ENCODE measurements at regions of chr4 and their contacts with region 1.

Region 1: DNA sequence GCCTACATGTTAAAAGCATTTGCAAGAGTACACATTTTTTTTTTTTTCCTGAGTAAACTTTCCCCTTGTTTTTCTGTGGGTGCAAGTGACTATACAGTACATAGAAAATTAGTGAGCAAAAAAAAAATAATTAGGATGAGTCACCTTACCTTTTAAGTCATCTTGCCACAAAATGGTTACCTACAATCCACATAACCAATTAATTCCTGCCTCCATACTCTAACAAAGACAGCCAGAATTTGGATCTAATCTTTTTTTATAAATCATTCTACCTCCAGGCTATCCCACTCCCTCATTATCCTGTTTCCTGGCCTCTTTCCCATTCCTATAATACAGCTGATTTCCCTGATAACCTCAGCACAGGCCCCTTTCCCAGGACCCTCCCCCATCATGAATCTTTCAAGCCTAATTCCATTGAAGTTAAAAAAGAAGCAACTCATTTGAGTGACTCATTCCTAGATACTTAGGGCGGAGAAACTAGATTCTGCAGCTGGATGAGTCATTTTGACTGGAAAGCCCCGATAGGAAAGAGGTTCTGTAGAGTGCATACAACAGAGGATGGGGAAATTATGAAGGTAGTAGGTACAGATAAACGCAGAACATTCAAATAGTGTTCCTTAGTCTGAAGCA is 128.2 kb downstream of the C4orf51 start:
- DNase-seq: peak; percentile 60
- H3K4me3 Mint-ChIP-seq: peak overlapping the region; percentile 30
- H3K27ac Mint-ChIP-seq: peak overlapping the region; percentile 89
- H3K4me1 Mint-ChIP-seq: peaks cover 65% of the 10 kb centered on the region
- H3K27me3 Mint-ChIP-seq: no peaks in the 10 kb centered on the region

Region 2: DNA sequence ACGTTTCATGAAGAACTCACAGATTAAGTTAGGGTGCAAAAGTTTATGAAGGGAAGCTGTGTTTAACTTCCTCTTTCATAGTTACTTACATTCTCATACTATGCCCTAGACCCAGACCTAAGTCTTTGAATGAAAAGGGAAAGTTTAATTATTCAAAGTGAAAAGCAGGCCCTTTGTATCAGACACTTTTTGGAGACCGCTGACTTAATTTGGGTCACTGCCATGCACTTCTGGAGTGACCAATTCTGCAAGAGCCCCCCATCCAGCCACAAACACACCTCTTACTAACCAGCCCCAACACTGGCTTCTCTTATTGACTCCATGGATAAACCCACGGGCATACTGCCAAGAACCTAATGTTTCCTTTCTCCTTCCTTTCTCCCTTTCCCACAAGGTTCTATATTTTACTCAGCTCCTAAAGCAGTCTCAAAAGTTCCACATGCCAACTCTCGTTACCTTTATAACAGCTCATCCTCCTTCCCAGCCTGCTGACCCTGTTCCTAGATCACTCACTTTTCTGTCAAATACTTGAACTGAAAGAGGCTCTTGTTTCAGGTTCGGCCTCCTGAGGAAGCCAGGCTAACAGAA is 675.5 kb before region 1 on chr4:
- CTCF ChIA-PET with region 1: no interaction called
- POLR2A ChIA-PET with region 1: no interaction called
- intact Hi-C with region 1: loop called (anchors 1 kb)
- DNase-seq: peak; percentile 56
- H3K4me3 Mint-ChIP-seq: no peak overlapping the region
- H3K27ac Mint-ChIP-seq: peak overlapping the region; percentile 52
- H3K4me1 Mint-ChIP-seq: peaks cover 59% of the 10 kb centered on the region
- H3K27me3 Mint-ChIP-seq: no peaks in the 10 kb centered on the region

Region 3: GRCh38 chr4:145719752-145720624 is 88.1 kb before region 1 on chr4:
- CTCF ChIA-PET with region 1: interaction called, 3 read pairs
- POLR2A ChIA-PET with region 1: no interaction called
- intact Hi-C with region 1: loop called (anchors 1 kb)
- DNase-seq: peak; percentile 76
- H3K4me3 Mint-ChIP-seq: no peak overlapping the region
- H3K27ac Mint-ChIP-seq: peak overlapping the region; percentile 76
- H3K4me1 Mint-ChIP-seq: peaks cover 21% of the 10 kb centered on the region
- H3K27me3 Mint-ChIP-seq: peaks cover 15% of the 10 kb centered on the region

Region 4: GRCh38 chr4:145784036-145784435 is 24.1 kb before region 1 on chr4:
- CTCF ChIA-PET with region 1: interaction called, 3 read pairs
- POLR2A ChIA-PET with region 1: interaction called, 5 read pairs
- intact Hi-C with region 1: loop called (anchors 1 kb)
- DNase-seq: peak; percentile 64
- H3K4me3 Mint-ChIP-seq: no peak overlapping the region
- H3K27ac Mint-ChIP-seq: peak overlapping the region; percentile 89
- H3K4me1 Mint-ChIP-seq: peaks cover 39% of the 10 kb centered on the region
- H3K27me3 Mint-ChIP-seq: no peaks in the 10 kb centered on the region

Region 5: DNA sequence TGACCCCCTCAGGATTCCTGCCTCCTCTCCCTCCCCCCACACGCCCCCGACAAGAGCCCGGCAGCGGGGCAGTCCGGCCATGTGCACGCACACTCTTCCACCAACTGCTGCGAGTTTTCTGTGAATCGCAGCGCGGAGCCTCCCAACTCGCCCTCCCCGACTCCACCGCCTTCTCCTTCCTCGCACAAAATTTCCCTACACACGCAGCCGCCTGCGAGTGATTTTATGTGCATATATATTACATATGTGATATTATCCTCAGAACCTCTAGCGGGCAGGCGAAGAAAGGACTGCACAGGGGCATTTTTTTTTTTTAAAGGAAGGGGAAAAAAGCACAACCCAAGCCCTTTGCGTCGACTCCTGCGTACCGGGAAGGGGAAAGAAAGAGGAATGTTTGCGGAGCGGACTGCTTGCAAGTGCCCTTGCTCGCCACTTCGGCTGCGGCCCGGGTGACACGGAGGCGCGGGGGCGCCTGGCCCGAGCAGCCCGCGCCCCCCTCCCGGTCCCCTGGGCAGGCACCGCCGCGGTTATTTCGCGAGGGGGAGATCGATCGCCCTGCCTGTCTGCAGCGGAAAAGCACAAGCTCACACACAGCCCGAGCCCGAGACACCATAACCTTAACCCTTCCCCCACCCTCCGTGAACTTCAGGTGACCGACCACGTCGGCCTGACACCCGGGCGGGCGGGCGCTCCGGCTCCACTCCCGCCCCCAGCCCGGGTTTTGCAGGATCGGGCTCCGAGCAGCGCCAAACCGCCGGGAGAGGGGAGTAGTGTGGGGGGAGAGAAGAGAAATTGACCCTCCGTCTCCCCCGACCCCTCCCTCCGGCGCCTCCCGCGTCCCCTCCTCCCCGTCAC is 128.2 kb after region 1 on chr4:
- CTCF ChIA-PET with region 1: interaction called, 3 read pairs
- POLR2A ChIA-PET with region 1: interaction called, 6 read pairs
- intact Hi-C with region 1: loop called (anchors 1 kb)
- DNase-seq: peak; percentile 72
- H3K4me3 Mint-ChIP-seq: peak overlapping the region; percentile 90
- H3K27ac Mint-ChIP-seq: peak overlapping the region; percentile 97
- H3K4me1 Mint-ChIP-seq: peaks cover 43% of the 10 kb centered on the region
- H3K27me3 Mint-ChIP-seq: peaks cover 1% of the 10 kb centered on the region

Region 6: GRCh38 chr4:146458594-146458993 is 650.5 kb after region 1 on chr4:
- CTCF ChIA-PET with region 1: no interaction called
- POLR2A ChIA-PET with region 1: no interaction called
- intact Hi-C with region 1: loop called (anchors 5 kb)
- DNase-seq: no peak
- H3K4me3 Mint-ChIP-seq: peak overlapping the region; percentile 46
- H3K27ac Mint-ChIP-seq: peak overlapping the region; percentile 89
- H3K4me1 Mint-ChIP-seq: peaks cover 17% of the 10 kb centered on the region
- H3K27me3 Mint-ChIP-seq: no peaks in the 10 kb centered on the region

Measured in activated CD4-positive, alpha-beta memory T cell treated with anti-CD3 and anti-CD28 coated beads for 36 hours (primary cell).